Activated naive CD4-positive, alpha-beta T cell treated with anti-CD3 and anti-CD28 coated beads for 36 hours (primary cell): ENCODE measurements at regions of chr5 and their contacts with region 1.

Region 1: DNA sequence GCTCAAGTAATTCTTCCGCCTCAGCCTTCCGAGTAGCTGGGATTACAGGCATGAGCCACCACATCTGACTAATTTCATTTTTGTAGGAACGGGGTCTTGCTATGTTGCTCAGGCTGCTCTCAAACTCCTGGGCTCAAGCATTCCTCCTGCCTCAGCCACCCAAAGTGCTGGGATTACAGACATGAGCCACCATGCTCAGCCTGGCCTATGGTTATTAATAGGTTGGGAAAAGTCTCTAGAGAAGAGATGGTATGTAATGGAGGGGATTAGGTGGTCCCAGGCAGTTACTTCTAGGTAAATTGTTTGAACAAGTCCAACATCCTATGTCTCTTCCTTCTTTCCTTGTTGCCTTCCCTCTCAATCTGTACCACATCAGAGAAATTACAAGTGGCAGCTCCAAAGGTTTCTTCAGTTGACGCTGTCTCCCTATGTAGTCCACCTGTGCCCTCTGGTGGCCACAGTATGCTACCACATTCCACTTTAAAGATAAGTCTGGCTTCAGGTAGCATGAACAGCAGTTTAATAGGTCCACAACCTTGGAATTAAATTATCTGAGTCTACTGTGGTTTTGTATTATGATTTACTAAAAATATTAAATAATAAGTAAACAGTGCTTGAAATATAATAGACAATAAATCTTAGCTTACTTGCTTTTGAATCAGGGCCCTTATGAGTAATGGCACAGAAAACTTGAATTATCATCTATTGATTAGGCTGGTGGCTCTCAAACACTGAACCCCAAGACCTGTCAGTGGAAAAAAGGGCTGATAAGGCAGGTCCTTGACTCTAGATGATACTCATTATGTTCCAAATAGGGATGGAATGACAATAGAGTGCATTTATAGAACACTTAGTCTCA is 9.7 kb downstream of the TIGD6 start:
- DNase-seq: peak; percentile 83
- H3K4me3 Mint-ChIP-seq: no peak overlapping the region
- H3K27ac Mint-ChIP-seq: no peak overlapping the region
- H3K4me1 Mint-ChIP-seq: no peaks in the 10 kb centered on the region
- H3K27me3 Mint-ChIP-seq: no peaks in the 10 kb centered on the region

Region 2: GRCh38 chr5:149636851-149637246 is 353.9 kb before region 1 on chr5:
- CTCF ChIA-PET with region 1: interaction called, 7 read pairs
- intact Hi-C with region 1: loop called (anchors 1 kb)
- DNase-seq: peak; percentile 82
- H3K4me3 Mint-ChIP-seq: no peak overlapping the region
- H3K27ac Mint-ChIP-seq: no peak overlapping the region
- H3K4me1 Mint-ChIP-seq: peaks cover 13% of the 10 kb centered on the region
- H3K27me3 Mint-ChIP-seq: no peaks in the 10 kb centered on the region

Region 3: DNA sequence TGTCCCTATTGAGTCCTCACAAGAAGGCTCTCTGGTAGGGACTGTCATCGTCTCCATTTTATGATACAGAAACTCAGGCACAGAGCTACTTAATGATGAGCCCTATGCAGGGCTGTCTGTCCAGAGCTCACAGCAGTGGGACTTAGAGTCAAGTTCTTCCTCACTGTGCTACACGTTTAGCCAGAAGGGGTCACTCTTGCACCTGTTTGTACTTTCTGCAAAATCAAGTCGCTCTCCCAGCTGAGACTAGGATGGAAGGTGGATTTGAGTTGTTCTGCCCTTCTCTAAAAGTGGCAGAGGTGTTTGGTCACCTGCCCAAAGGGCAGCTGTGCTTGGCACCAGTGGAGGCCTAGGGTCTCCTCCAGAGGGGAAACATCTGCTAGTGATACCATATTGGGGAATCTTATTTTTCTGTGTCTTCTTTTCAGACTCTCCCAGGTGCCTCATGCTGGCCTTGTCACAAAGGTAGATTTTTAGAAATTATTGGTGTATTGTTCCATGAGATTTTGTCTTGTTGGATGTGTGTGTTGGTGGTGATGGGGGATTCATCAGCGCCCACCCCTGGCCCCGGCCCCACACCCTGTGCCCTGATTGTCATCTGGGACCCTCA is 156.4 kb before region 1 on chr5:
- CTCF ChIA-PET with region 1: interaction called, 84 read pairs
- intact Hi-C with region 1: loop called (anchors 1 kb)
- DNase-seq: peak; percentile 79
- H3K4me3 Mint-ChIP-seq: no peak overlapping the region
- H3K27ac Mint-ChIP-seq: no peak overlapping the region
- H3K4me1 Mint-ChIP-seq: peaks cover 5% of the 10 kb centered on the region
- H3K27me3 Mint-ChIP-seq: no peaks in the 10 kb centered on the region

Region 4: DNA sequence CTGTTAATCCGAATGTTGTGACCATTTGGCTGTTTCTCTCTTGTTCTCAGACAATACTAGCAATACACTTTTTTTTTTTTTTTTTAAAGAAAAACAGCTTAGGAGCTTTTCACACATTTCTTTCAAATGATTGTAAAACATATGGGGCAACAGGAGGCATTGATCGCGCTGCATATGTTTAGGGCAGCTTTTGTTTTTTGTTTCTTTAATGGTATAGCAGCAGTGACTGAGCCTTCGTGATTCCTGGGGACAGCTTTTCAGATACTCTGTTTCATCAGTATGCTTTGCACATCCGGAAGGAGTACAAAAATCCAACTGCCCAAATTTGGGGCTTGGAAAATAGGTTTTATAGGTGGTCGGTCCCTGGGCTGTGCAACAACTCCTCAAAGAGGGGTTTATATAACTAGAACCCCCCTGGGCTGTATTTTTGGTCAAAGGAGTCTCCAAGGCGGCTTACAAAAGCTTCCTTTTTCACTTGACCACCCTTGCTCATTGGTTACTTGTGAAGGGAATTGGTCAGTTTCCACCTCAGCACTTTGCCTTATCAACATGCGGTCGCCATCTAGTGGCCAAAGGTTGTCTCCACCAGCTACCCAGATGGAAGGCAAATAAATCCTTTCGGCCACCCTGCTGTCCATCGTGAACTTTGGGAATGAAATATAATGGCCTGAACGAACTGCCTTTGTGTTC is 138.0 kb before region 1 on chr5:
- CTCF ChIA-PET with region 1: interaction called, 23 read pairs
- intact Hi-C with region 1: loop called (anchors 1 kb)
- DNase-seq: peak; percentile 70
- H3K4me3 Mint-ChIP-seq: no peak overlapping the region
- H3K27ac Mint-ChIP-seq: no peak overlapping the region
- H3K4me1 Mint-ChIP-seq: no peaks in the 10 kb centered on the region
- H3K27me3 Mint-ChIP-seq: no peaks in the 10 kb centered on the region

Region 5: DNA sequence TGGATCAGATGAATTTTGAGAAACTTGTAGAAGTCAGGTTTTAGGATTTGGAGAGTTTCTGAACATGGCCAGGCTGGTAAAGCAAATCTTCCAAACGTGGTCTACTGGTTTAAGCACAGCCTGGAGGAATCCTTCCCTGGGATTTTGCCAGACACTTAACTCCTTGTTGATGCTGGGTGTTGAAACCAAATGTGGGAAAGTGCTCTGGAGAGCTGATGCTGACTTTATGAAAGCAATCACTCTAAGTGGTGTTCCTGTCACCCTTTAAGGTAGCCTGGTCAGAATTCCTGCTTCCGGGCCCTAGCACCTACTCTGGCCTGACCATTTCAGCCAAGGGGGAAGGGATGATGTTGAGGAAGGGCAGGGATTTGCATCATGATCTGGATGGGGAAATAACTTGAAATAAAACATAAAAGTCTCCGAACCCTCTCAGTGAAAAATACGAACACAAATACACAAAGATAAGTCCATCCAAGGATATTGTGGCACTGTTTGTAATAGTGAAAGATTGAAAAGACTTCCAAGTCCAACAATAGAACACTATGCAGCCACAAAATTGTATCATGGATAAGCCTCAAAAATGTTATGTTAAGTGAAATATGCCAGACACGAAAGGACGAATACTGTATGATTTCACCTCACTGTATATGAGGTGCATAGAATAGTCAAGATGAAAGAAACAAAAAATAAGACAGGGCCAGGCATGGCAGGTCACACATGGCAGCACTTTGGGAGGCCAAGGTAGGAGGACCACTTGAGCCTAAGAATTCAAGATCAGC is 103.9 kb before region 1 on chr5:
- CTCF ChIA-PET with region 1: no interaction called
- intact Hi-C with region 1: no loop called
- DNase-seq: no peak
- H3K4me3 Mint-ChIP-seq: no peak overlapping the region
- H3K27ac Mint-ChIP-seq: no peak overlapping the region
- H3K4me1 Mint-ChIP-seq: no peaks in the 10 kb centered on the region
- H3K27me3 Mint-ChIP-seq: no peaks in the 10 kb centered on the region

Region 6: DNA sequence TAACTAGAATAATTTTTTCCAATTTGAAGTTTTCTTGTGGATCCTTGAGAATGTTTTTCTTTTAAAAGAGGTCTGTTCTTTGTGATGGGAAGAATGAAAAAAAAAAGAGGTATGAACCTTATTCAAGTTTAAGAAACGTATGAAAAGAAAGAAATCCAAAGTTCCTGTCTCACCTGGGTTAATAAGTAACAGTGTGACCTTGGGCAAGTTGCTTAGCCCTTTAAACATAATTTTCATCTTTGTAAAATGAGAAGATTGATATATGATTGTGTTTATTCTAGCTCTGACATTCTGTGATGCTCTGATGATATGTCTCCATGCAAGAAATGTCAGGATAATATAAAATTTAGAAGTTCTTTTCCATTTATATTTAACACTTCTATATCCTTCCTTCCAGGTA is 10.9 kb before region 1 on chr5:
- CTCF ChIA-PET with region 1: interaction called, 13 read pairs
- intact Hi-C with region 1: no loop called
- DNase-seq: no peak
- H3K4me3 Mint-ChIP-seq: no peak overlapping the region
- H3K27ac Mint-ChIP-seq: no peak overlapping the region
- H3K4me1 Mint-ChIP-seq: peaks cover 4% of the 10 kb centered on the region
- H3K27me3 Mint-ChIP-seq: no peaks in the 10 kb centered on the region